Cardiac septum (tissue), 1 donor: ENCODE measurements at regions of chr1 and their contacts with region 1.

Region 1: GRCh38 chr1:226121587-226122400 is 59.3 kb downstream of the H3-3A start:
- DNase-seq: peak; percentile 86

Region 2: DNA sequence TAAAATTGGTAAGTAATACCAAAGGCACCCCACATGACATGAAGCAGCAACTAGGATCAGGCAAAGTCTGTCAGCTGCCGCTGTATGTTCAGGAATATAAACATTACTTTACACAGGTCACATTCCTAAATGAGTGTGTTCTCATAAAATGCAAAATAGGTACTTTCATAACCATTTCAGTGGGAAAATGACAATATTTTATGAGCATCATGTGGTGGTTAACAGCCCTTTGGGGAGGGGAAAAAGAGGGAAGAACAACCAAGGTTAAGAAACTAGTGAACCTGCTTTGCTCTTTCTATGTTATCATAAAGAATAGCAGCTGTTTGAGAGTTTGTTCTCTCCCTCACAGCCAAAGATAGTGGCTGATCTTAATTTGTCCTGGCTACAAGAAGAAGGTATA is 588.6 kb before region 1 on chr1:
- intact Hi-C with region 1: no loop called
- DNase-seq: no peak

Region 3: DNA sequence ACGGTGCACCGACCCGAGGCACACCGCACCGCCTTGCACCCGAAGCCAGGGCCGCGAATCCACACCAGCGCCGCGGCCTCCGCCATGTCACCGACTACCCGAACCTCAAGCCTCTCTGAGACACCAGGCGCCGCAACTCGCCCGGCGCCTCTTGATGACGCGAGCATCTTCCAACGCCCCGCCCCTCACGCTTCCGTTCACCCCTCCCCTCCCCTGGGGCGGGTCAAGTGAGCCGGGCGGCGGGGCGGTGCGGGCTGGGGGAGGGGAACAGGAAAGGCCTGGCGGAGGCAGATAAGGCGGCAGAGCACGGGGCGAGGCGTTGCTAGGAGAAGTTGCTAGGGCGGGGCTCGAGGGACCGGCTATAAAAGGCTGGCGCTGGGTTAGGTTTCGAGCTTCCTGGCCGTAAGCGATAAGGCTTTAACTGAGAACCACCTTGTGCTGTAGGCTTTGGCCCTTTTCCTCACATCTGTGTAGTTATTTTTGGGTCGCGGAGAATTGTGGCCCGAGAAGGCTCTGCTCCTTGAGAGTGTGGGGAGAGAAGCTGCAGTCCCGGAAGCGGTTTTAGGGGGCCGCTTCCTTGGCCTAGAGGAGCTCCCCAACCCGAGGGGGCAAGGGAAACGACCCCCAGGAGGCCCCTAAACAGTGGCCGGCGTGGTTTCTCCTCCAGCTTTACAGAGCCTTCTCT is 122.4 kb before region 1 on chr1 and contains the start of gene SDE2:
- intact Hi-C with region 1: loop called (anchors 5 kb)
- DNase-seq: peak; percentile 100
- total RNA-seq, gene SDE2: 14.6 TPM

Region 4: GRCh38 chr1:226083302-226084101 is 38.3 kb before region 1 on chr1:
- intact Hi-C with region 1: loop called (anchors 5 kb)
- DNase-seq: peak; percentile 96

Region 5: DNA sequence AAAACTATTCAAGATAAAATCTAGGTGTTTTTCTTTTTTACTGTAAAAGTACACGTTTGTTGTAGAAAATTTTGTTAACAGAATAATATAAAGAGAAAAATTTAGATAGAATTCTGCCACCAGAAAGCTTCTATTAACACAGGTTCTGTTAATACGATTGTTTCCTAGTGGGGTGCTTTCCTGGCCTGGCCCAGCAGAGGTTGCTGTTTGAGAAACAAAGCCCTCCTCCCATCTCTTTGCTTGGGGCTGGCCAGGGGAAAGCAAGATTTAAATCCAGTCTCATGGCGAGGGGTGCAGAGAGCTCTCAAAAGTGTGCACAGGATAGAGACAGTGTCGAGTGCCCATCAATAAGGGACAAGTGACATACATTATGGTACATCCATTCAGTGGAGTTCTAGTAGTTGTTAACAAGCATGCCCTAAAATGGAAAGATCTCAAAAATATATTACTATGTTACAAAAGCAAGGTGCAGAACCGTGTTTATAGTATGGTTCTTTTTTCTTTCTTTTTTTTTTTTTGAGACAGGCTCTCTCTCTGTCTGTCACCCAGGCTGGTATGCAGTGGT is 79.3 kb after region 1 on chr1:
- intact Hi-C with region 1: loop called (anchors 2 kb)
- DNase-seq: no peak

Region 6: DNA sequence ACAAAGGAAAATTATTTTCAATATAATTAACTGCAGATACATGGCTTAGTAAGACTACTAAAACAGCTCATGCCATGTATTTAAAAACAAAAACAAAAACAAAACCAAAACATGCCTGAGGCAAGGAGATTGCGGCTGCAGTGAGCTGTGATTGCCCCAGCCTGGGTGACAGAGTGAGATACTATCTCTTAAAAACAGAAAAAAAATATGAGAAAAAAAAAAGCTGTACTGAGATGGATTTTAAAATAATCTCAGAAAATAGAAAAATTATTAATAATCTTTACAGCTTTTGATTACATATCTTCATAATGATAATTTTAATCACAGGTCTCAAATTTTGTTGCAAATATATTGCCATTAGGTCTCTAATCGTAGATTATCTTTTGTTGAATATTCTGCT is 211.2 kb after region 1 on chr1:
- intact Hi-C with region 1: loop called (anchors 5 kb)
- DNase-seq: no peak